ENCODE measurements at regions of chr18 and their contacts with region 1.

Region 1: DNA sequence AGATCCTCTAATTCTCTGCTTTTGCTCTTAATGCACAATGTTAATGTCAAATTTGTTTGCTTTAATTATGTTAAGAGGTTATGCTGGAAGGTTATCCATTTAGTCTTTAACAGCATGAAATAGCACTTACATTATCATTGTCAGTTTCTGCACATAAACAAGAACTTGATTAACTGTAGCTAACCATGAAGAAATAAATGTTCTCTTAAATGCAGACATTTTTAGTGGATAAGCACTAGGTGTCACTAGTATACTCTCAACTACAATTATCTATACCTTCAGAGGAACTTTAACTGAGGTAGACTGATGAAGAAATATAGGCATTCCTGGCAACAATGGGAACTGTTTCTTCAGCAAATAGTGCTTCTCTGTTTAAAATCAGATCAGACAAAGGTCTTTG is 178.8 kb upstream of the CHST9 start:
- DNase-seq: no peak
- ATAC-seq: no peak

Region 2: DNA sequence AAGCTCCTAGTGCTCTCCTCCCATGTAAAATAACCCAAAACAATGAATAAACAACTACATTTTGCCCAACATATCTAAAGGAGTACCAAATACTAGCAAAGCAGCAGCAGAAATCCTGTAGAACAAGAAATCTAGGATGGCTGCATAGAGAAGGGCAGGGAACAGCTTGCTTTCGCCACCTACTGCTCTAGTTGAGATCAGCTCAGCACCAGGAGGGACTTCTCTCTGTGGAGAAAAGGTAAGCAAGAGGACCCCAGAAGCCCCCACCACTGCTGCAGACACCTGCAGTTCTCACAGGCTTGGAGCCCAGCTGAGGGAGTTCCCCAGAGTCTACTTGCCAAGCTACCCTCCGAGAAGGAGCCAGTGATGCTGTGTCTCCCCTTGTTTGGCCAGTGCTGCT is 64.2 kb after region 1 on chr18:
- intact Hi-C with region 1: loop called (anchors 10 kb)
- DNase-seq: no peak
- ATAC-seq: no peak

Region 3: GRCh38 chr18:27558388-27559155 is 194.7 kb after region 1 on chr18:
- intact Hi-C with region 1: no loop called
- DNase-seq: no peak
- ATAC-seq: peak; percentile 94

Region 4: DNA sequence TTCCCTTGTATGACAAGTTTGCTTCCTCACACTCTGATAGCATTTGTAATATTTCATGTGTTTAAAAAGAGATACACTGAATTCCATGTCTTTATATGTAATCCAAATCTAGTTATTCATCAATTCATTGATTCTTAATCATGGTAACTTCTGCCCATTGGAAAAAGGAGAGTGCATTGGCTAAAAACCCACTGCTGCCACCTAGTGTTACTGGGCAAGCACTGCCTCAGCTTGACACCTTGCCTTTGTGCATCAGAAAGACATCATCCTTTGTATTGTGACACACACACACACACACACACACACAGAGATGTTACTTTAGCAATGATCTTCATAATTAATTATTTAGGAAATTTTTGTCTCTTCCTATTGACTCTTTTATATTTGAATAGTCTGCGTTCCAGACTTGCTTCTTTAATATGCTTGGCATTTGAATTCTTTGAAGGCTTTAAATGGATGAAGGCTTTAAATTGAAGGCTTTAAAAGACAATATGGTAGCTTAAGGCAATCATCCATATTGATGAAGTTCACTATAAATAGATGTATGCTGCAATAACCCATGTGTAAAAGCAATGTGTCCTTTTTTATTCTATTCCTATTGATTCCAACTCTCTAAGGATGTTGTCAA is 235.4 kb after region 1 on chr18:
- intact Hi-C with region 1: loop called (anchors 2 kb)
- DNase-seq: peak; percentile 43
- ATAC-seq: peak; percentile 72